A673 (cell line): ENCODE measurements at regions of chr4 and their contacts with region 1.

Region 1: DNA sequence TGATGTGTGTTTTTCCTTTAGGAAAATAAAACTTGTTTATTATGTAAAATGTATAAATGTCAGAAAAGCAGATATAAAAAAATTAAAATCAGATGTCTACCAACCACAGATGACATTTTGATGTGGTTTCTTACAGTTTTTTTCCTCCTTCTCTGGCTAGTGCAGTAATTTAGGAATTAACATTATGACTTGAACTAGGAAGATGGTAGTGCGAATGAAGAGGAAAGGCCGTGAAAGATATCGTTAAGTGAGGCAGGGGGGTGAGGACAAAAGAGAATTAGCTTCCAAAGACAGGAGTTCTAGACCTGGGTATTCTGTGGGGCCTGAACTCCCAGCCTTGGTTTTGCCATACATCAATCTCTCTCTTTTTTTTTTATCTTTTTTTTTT is 98.0 kb downstream of the RBM47 start:
- DNase-seq: no peak
- H3K4me3 ChIP-seq: no peak overlapping the region
- H3K27ac ChIP-seq: no peak overlapping the region
- H3K4me1 ChIP-seq: no peaks in the 10 kb centered on the region
- H3K27me3 ChIP-seq: no peaks in the 10 kb centered on the region
- CTCF ChIP-seq: no peak

Region 2: DNA sequence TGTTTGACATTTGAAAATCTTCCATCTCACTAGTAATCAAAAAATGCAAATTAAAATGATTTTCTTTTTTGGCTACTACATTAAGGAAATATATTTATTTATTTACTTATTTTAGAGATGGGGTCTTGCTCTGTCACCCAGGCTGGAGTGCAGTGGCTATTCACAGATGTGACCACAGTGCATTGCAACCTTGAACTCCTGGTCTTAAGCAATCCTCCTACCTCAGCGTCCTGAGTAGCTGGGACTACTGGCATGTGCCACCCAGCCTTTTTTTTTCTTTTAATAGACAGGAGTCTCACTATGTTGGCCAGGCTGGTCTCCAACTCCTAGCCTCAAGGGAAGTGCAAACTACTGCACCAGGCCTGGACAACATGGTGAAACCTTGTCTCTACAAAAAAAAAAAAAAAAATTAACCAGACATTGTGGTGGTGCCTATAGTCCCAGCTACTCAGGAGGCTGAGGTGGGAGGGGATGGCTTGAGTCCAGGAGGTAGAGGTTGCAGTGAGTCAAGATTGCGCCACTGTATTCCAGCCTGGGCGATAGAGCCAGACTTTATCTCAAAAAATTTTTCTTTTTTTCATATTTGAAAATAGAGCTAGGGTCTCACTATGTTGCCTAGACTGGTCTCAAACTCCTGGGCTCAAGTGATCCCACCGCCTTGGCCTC is 888.6 kb before region 1 on chr4:
- CTCF ChIA-PET with region 1: no interaction called
- POLR2A ChIA-PET with region 1: no interaction called
- intact Hi-C with region 1: no loop called
- DNase-seq: no peak
- H3K4me3 ChIP-seq: no peak overlapping the region
- H3K27ac ChIP-seq: no peak overlapping the region
- H3K4me1 ChIP-seq: peaks cover 7% of the 10 kb centered on the region
- H3K27me3 ChIP-seq: no peaks in the 10 kb centered on the region
- CTCF ChIP-seq: no peak

Region 3: GRCh38 chr4:40455340-40455902 is 76.2 kb before region 1 on chr4:
- CTCF ChIA-PET with region 1: no interaction called
- POLR2A ChIA-PET with region 1: no interaction called
- intact Hi-C with region 1: no loop called
- DNase-seq: no peak
- H3K4me3 ChIP-seq: no peak overlapping the region
- H3K27ac ChIP-seq: no peak overlapping the region
- H3K4me1 ChIP-seq: no peaks in the 10 kb centered on the region
- H3K27me3 ChIP-seq: no peaks in the 10 kb centered on the region
- CTCF ChIP-seq: no peak

Region 4: GRCh38 chr4:40888933-40889332 is 357.3 kb after region 1 on chr4:
- CTCF ChIA-PET with region 1: no interaction called
- POLR2A ChIA-PET with region 1: interaction called, 18 read pairs
- intact Hi-C with region 1: no loop called
- DNase-seq: no peak
- H3K4me3 ChIP-seq: no peak overlapping the region
- H3K27ac ChIP-seq: no peak overlapping the region
- H3K4me1 ChIP-seq: peaks cover 6% of the 10 kb centered on the region
- H3K27me3 ChIP-seq: no peaks in the 10 kb centered on the region
- CTCF ChIP-seq: no peak